HEK293 (cell line): ENCODE measurements at regions of chr1 and their contacts with region 1.

Region 1: DNA sequence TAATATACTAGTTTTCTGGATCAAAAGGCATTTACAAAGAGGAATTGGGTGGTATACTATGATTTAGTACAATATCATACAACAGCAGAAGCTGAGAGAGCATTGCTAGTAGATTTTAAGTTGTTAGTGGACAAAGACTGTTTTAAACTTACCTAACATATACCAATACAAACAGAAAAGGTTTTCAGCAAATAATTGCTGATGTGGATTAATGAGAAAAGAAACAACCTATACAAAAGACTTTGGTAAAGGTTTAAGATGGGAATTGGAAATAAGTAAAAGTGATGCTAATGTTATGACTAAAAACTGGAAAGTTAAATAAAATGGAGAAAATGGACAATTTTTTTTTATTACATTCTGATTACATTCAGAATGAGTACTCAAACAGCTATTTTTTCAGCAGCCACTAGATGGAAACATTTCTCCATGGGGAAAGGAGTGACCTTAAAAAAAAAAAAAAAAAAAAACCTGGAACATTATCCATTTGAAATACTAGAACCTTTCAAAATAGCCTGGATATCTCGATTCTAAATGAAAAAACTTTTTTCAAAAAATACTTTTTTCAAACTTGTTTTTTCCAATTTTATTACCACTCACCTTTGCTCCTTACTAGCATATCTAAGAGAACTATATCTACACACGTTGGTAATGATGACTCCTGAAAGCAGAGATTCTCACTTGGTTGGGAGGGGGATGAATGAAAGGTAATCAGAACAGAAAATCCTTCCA is 55.4 kb downstream of the EPRS1 start:
- H3K4me3 ChIP-seq: no peak overlapping the region
- H3K27ac ChIP-seq: no peak overlapping the region
- H3K4me1 ChIP-seq: no peaks in the 10 kb centered on the region
- CTCF ChIP-seq: peak; percentile 34; the same call in 1 of the 2 replicates

Region 2: GRCh38 chr1:219973213-219973612 is 17.7 kb before region 1 on chr1:
- CTCF ChIA-PET with region 1: interaction called, 10 read pairs
- POLR2A ChIA-PET with region 1: interaction called, 3 read pairs
- H3K4me3 ChIP-seq: no peak overlapping the region
- H3K27ac ChIP-seq: no peak overlapping the region
- H3K4me1 ChIP-seq: no peaks in the 10 kb centered on the region
- CTCF ChIP-seq: no peak

Region 3: GRCh38 chr1:220012259-220012658 is 21.3 kb after region 1 on chr1:
- CTCF ChIA-PET with region 1: interaction called, 11 read pairs
- POLR2A ChIA-PET with region 1: no interaction called
- H3K4me3 ChIP-seq: no peak overlapping the region
- H3K27ac ChIP-seq: no peak overlapping the region
- H3K4me1 ChIP-seq: no peaks in the 10 kb centered on the region; the same call in 1 of the 2 replicates
- CTCF ChIP-seq: no peak

Region 4: GRCh38 chr1:220137019-220137786 is 146.3 kb after region 1 on chr1:
- CTCF ChIA-PET with region 1: no interaction called
- POLR2A ChIA-PET with region 1: no interaction called
- H3K4me3 ChIP-seq: no peak overlapping the region
- H3K27ac ChIP-seq: no peak overlapping the region
- H3K4me1 ChIP-seq: no peaks in the 10 kb centered on the region
- CTCF ChIP-seq: no peak